PC-9 (cell line): ENCODE measurements at regions of chr9 and their contacts with region 1.

Region 1: DNA sequence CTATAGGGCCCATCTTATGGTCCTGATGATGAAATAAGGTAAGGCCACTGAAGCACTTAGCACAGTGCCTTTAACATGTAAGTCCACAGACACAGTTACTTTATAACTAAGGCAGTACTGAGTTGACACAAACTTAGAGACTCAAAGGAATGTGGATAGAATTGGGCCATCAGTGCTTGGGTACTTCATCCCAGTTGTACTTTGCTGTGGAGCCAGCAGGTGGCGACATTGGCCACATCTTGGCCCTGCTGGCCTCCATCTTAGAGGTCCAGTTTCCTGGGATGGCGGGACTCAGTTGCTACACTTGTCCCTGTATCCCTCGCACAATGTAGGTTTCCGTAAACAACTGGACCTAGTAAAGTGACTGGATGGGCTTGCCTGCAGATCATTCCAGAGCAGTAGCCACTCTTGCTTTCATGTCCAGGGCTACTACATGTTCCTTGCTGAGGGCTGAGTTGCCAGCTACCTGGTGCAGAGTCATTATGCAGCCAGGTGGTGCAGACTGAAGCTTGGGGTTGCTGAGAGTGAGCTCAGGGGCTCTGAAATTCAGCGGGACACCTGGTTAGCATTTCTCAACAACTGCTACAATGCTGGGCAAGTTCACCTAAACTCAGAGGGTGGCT is 10.6 kb downstream of the MTAP start:
- DNase-seq: peak; percentile 47 to 54
- H3K4me3 ChIP-seq: no peak overlapping the region
- H3K27ac ChIP-seq: peak overlapping the region; percentile 53
- H3K4me1 ChIP-seq: 0 out of 2 replicates have a peak, but pooled peaks cover 7% of the 10 kb centered on the region
- H3K27me3 ChIP-seq: no peaks in the 10 kb centered on the region
- CTCF ChIP-seq: peak; percentile 81

Region 2: DNA sequence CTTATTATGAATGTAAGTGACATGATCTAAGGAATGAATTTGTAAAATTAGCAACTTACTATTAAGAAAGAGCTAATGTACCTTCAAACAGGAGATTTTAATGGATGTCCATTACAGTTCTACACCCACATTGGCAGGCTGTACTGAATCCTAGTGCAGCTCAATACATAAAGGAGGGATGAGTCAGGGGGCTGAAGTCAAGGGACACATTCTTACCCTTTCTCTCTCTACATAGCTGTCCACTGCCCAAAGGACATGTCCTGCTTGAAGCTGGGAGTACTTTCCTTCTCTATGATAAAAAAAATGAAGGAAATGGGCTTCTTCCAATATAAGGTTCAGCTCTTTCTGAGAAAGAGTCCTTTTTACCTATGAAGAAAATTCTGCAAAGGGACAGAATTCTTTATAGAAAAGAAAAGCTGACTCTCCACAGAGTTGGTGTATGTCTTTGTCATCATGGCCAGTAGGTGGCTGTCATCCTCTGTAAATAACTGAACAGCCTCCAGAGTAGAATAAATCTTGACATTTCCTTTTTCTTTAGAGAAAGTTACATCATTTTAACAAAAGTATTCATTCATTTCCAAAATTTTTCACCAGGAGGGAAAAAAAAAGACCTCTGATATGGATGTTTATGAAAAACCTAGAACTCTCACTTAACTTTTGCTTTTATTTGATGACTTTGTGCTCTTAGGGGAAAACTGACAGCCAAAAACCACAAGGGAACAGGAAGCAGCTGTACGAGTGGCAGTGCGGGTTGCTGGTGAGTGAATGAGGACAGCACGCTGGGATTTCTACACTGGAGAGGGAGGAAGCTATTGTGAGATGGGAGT is 560.1 kb before region 1 on chr9:
- CTCF ChIA-PET with region 1: no interaction called
- POLR2A ChIA-PET with region 1: no interaction called
- intact Hi-C with region 1: loop called (anchors 5 kb)
- DNase-seq: peak in 1 of 2 experiments; percentile 5
- H3K4me3 ChIP-seq: no peak overlapping the region
- H3K27ac ChIP-seq: no peak overlapping the region
- H3K4me1 ChIP-seq: no peaks in the 10 kb centered on the region
- H3K27me3 ChIP-seq: no peaks in the 10 kb centered on the region
- CTCF ChIP-seq: peak; percentile 74

Region 3: DNA sequence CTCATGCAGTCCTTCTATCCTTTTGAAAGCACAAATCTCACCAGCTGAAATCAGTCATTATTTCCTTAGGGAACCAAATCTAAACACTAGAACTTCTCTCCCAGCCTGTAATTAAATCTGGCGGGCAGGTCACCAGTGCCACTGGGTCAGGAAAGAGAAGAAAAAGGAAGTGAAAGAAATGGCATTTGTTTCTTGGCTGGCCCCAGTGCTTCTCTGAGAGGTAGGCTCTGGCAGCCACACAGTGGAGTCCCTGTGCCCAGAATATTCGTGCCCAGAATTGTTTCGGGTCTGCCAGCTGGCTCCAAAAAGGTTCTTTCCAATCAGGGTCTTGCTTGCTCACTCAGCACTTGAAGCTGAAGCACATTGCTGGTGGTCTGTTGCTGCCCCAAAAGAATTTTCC is 144.5 kb before region 1 on chr9:
- CTCF ChIA-PET with region 1: no interaction called
- POLR2A ChIA-PET with region 1: no interaction called
- intact Hi-C with region 1: no loop called
- DNase-seq: no peak
- H3K4me3 ChIP-seq: no peak overlapping the region
- H3K27ac ChIP-seq: no peak overlapping the region
- H3K4me1 ChIP-seq: no peaks in the 10 kb centered on the region
- H3K27me3 ChIP-seq: no peaks in the 10 kb centered on the region
- CTCF ChIP-seq: no peak

Region 4: DNA sequence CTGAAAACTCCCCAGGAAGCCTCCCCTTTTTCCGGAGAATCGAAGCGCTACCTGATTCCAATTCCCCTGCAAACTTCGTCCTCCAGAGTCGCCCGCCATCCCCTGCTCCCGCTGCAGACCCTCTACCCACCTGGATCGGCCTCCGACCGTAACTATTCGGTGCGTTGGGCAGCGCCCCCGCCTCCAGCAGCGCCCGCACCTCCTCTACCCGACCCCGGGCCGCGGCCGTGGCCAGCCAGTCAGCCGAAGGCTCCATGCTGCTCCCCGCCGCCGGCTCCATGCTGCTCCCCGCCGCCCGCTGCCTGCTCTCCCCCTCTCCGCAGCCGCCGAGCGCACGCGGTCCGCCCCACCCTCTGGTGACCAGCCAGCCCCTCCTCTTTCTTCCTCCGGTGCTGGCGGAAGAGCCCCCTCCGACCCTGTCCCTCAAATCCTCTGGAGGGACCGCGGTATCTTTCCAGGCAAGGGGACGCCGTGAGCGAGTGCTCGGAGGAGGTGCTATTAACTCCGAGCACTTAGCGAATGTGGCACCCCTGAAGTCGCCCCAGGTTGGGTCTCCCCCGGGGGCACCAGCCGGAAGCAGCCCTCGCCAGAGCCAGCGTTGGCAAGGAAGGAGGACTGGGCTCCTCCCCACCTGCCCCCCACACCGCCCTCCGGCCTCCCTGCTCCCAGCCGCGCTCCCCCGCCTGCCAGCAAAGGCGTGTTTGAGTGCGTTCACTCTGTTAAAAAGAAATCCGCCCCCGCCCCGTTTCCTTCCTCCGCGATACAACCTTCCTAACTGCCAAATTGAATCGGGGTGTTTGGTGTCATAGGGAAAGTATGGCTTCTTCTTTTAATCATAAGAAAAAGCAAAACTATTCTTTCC is 161.7 kb after region 1 on chr9:
- CTCF ChIA-PET with region 1: no interaction called
- POLR2A ChIA-PET with region 1: no interaction called
- intact Hi-C with region 1: loop called (anchors 2 kb)
- DNase-seq: peak; percentile 72 to 82
- H3K4me3 ChIP-seq: peak overlapping the region; percentile 65
- H3K27ac ChIP-seq: peak overlapping the region; percentile 75
- H3K4me1 ChIP-seq: peaks cover 31% of the 10 kb centered on the region
- H3K27me3 ChIP-seq: no peaks in the 10 kb centered on the region
- CTCF ChIP-seq: no peak

Region 5: GRCh38 chr9:22037954-22038690 is 225.1 kb after region 1 on chr9:
- CTCF ChIA-PET with region 1: interaction called, 3 read pairs
- POLR2A ChIA-PET with region 1: no interaction called
- intact Hi-C with region 1: loop called (anchors 2 kb)
- DNase-seq: peak in 1 of 2 experiments; percentile 39
- H3K4me3 ChIP-seq: no peak overlapping the region
- H3K27ac ChIP-seq: 0 out of 2 replicates have a peak overlapping the region, but pooled peaks have one; percentile 24
- H3K4me1 ChIP-seq: peaks cover 57% of the 10 kb centered on the region
- H3K27me3 ChIP-seq: no peaks in the 10 kb centered on the region
- CTCF ChIP-seq: peak; percentile 51; the same call in 1 of the 2 replicates

Region 6: GRCh38 chr9:22244141-22245011 is 431.3 kb after region 1 on chr9:
- CTCF ChIA-PET with region 1: interaction called, 7 read pairs
- POLR2A ChIA-PET with region 1: interaction called, 4 read pairs
- intact Hi-C with region 1: loop called (anchors 1 kb)
- DNase-seq: peak in 1 of 2 experiments; percentile 49
- H3K4me3 ChIP-seq: no peak overlapping the region
- H3K27ac ChIP-seq: no peak overlapping the region
- H3K4me1 ChIP-seq: peaks cover 31% of the 10 kb centered on the region
- H3K27me3 ChIP-seq: no peaks in the 10 kb centered on the region
- CTCF ChIP-seq: peak; percentile 14

Region 7: GRCh38 chr9:22452415-22453010 is 639.5 kb after region 1 on chr9:
- CTCF ChIA-PET with region 1: no interaction called
- POLR2A ChIA-PET with region 1: no interaction called
- intact Hi-C with region 1: loop called (anchors 2 kb)
- DNase-seq: peak in 1 of 2 experiments; percentile 27
- H3K4me3 ChIP-seq: no peak overlapping the region
- H3K27ac ChIP-seq: no peak overlapping the region
- H3K4me1 ChIP-seq: peaks cover 12% of the 10 kb centered on the region; the same call in 1 of the 2 replicates
- H3K27me3 ChIP-seq: no peaks in the 10 kb centered on the region
- CTCF ChIP-seq: peak; percentile 82